SK-N-SH (cell line): ENCODE measurements at regions of chr20 and their contacts with region 1.

Region 1: DNA sequence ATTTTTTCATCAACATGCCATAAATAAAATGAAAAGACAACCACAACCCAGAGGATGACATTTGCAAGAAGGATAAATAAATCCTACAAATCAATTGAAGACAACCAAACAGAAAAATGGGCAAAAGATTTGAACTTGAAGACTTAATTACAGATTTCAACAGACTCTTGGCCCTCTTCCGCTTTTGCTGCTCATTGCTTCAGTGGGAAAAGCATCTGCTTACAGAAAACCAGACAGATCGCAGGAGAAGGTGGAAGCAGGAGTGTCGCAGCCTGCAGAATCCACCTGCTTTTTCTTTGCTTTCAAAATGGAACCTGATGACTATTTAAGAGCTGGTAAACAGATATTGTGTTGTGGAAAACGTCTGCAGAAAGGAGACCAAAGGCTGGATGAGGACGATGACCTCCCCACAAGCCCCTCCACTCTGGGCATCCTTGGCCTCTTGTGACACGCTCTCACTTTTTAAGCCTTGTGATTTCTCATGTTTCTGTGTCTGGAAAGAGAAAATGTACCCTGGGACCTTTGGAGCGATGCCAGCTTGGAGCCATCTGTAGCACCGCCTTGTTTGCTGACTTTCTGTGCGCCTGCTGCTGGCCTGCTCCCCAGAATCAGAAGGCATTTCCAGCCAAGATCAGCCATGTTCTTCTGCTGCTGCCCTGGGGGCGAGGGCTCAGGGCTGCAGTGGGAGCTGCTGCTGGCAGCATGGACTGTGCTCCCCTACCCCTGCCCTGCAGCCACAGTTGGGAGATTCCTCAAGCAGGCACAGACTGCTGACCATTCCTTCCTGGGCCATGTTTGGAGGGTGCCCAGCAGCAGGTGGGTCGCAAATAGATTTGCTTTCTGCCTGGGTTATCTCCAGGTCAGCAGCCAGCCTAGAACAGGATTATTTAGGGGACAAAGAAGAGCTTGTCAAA is 3.6 kb upstream of the CSTL1 start:
- DNase-seq: peak; percentile 60
- H3K4me3 ChIP-seq: no peak overlapping the region
- H3K27ac ChIP-seq: peak overlapping the region in 1 of 2 experiments; percentile 62; a peak in 1 of 4 replicates
- H3K4me1 ChIP-seq: peaks cover 0 to 11% of the 10 kb centered on the region in 2 experiments; a peak in 1 of 4 replicates
- H3K27me3 ChIP-seq: no peaks in the 10 kb centered on the region; the same call in 1 of the 2 replicates
- CTCF ChIP-seq: no peak
- EP300 ChIP-seq: no peak
- RAD21 ChIP-seq: no peak

Region 2: DNA sequence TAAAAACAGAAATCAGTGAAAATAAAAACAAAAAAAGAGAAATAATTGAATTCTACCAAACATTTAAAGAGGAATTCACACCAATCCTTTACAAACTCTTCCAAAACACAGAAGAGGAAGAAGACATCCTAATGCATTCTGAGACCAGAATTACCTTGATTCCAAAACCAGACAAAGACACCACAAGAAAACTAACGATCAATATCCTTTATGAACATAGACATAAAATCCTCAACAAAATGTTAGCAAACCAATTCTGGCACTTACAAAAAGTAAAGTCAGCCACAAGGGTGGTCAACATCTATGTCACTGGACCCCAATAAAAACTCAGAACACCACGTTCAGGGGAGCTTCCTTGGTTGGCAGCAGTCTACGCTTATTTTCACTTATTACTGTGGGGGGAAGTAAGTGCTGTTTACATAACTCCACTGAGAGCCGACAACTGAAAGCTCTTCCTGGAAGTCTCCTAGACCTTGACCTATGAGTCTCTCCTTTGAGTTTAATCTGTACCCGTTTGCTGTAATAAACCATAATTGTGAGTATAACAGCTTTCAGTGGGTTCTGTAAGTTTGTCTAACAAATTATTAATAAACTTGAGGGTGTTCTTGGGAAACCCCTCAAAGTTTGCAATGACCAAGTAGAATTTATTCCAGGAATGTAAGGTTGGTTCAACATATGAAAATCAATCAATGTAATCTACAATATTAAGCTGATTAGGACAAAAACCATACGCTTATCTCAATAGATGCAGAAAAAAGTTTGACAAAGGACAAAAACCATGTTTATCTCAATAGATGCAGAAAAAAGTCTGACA is 49.4 kb before region 1 on chr20:
- CTCF ChIA-PET with region 1: no interaction called
- POLR2A ChIA-PET with region 1: no interaction called
- DNase-seq: no peak
- H3K4me3 ChIP-seq: no peak overlapping the region
- H3K27ac ChIP-seq: no peak overlapping the region
- H3K4me1 ChIP-seq: no peaks in the 10 kb centered on the region
- H3K27me3 ChIP-seq: no peaks in the 10 kb centered on the region
- CTCF ChIP-seq: no peak
- EP300 ChIP-seq: no peak
- RAD21 ChIP-seq: no peak

Region 3: GRCh38 chr20:23606652-23607049 is 170.8 kb after region 1 on chr20:
- CTCF ChIA-PET with region 1: interaction called, 92 read pairs
- POLR2A ChIA-PET with region 1: no interaction called
- DNase-seq: peak; percentile 81
- H3K4me3 ChIP-seq: no peak overlapping the region; a peak in 1 of 4 replicates
- H3K27ac ChIP-seq: no peak overlapping the region
- H3K4me1 ChIP-seq: no peaks in the 10 kb centered on the region
- H3K27me3 ChIP-seq: peaks cover 51% of the 10 kb centered on the region; the same call in 1 of the 2 replicates
- CTCF ChIP-seq: peak; percentile 84
- EP300 ChIP-seq: no peak
- RAD21 ChIP-seq: peak; percentile 82